Calu3 (cell line): ENCODE measurements at regions of chr20 and their contacts with region 1.

Region 1: DNA sequence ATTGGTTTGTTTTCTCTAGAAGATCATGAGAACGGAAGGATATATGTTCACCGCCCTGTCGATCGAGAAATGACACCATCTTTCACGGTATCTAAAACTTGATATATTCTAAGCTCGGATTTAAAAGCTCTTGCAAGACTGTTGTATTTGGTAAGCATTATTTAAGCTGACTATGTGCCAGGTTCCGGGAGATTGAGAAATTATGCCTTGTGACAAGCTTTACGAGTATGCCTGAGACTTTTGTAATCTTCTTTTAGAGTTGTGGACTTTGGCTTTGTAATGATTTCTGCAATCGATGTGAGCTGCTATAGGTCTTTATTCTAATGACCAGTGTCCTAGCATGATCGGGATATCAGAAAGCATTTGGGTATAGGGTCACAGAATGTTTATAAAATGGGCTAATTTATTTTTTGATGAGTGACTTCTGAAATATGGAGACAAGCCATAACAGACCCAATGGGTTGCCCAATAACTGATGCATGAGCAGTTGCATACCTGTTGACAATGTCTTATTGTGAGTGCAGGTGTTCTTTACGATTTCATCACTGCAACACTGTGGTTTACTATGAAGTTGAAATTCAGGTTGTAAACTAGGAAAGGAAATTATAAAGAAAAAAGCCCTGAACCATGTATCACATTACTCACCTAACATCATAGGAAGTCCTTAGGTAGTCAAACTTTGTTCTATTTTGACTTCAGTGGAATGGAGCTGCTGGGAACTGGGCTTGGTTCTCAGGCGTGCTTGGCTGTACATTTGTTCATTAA is 14.0 kb downstream of the CDH26 start:
- DNase-seq: peak; percentile 63
- H3K4me3 Mint-ChIP-seq: peak overlapping the region; percentile 42
- H3K27ac Mint-ChIP-seq: peak overlapping the region; percentile 74
- H3K4me1 Mint-ChIP-seq: peaks cover 25% of the 10 kb centered on the region
- H3K27me3 Mint-ChIP-seq: no peaks in the 10 kb centered on the region
- CTCF ChIP-seq: no peak

Region 2: DNA sequence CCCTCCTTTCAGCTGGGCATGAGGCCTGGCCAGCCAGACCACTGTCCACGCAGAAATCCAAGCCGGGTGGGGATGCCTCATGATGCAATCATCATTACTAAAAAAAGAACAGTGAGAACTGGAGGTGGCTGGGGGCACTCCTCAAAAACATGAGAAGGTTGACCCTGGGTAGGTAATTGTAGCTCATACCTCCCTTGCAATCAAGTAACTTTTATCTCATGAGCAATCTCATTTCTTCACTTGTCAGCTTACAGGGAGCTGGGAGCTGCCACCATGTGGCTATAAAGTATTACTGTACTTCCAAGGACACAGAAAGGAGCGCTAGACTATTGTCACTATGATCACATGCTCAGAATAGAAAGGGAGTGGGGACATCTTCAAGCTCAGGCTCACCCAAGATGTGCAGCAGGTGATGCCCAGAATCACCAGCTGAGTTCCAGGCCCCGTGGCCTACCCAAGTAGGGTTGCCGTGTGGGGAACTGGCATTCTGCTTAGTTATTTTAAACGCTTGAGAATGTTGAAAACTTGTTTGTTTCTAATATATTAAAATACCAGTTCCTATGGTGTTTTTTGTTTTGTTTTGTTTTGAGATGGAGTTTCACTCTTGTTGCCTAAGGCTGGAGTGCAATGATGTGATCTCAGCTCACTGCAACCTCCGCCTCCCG is 17.0 kb before region 1 on chr20:
- CTCF ChIA-PET with region 1: interaction called, 15 read pairs
- intact Hi-C with region 1: no loop called
- DNase-seq: peak; percentile 41
- H3K4me3 Mint-ChIP-seq: no peak overlapping the region
- H3K27ac Mint-ChIP-seq: no peak overlapping the region
- H3K4me1 Mint-ChIP-seq: no peaks in the 10 kb centered on the region
- H3K27me3 Mint-ChIP-seq: no peaks in the 10 kb centered on the region
- CTCF ChIP-seq: peak; percentile 40

Region 3: DNA sequence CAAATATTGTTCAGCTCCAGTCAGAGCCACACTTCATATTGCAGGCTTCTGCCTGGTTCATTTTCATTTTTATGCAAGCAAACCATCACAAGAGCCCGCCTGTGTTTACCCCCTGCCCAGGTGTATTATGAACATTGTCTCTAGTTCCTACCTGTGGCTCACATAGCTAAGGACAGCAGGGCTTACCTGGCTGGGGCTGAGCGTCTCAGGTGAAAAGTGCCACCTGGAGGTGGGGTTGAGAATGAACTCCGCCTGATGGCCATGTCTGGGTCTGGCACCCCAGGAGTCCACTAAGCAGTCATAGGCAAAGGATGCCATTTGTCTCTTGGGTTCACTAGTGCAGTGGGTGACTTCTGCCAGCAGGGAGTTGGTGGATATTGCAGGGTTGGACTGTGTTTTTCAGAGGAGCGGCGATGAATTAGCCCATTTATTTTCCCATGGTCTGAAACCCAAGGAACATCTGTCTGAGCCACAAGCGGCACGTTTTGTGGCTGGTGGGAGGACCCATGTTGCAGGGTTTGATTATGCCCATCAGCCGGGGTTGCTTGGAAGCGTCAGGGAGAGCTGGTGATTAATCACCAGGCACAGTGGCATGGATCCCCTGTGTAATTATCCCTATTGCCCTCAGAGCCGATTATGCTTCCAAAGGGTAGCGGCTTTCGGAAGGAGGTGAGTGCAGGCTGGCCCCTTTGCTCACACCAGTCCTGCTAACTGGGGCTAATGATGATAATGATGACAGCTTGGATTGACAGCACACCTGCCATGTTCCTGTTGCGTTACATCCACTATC is 78.1 kb after region 1 on chr20:
- CTCF ChIA-PET with region 1: interaction called, 7 read pairs
- intact Hi-C with region 1: loop called (anchors 5 kb)
- DNase-seq: peak; percentile 83
- H3K4me3 Mint-ChIP-seq: no peak overlapping the region
- H3K27ac Mint-ChIP-seq: no peak overlapping the region
- H3K4me1 Mint-ChIP-seq: peaks cover 21% of the 10 kb centered on the region
- H3K27me3 Mint-ChIP-seq: peaks cover 38% of the 10 kb centered on the region
- CTCF ChIP-seq: peak; percentile 79